Calu3 (cell line): ENCODE measurements at regions of chr17 and their contacts with region 1.

Region 1: DNA sequence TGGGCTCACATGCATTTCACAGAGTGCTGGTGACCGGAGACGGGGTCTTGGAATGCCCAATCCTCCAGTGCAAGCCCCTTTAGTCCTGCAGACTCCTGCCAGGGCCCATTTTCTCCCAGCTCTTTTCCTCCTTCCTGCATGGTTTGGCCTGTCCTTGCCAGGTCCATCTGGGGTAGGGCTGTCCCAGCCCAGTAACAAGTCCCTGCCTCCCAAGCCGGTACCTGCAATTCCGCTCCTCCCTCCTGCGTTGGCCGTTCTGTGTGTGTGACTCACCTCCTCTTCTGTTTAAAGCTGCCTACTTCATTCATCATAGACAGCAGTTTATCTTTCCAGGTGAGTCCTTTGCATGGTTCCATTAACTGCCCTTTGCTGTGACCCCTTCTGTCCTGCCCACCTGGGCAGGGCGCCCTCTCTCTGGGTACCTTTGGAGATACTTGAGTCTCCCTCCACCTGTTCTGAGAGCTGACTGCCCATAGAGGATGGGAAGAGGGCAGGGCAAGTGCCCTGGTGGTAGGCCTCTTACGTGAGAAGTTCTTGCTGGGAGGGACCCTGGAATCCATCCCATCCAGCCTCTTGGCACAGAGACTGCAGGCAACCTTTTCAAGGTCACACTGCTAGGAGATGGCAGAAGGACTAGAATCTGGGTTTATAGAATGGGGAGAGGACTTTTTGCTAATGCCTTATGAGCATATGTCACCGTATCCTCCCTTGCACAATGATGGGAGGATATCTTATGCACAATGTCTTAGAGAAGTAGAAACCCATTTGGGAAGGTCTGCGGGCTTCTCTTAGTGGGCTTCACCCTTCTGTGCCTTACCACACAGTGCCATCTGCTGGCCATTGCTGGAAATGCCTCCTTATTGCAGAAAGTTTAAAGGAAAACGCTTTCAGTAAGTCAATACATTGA is 29.7 kb upstream of the LGALS9 start:
- DNase-seq: peak; percentile 78
- H3K4me3 Mint-ChIP-seq: no peak overlapping the region
- H3K27ac Mint-ChIP-seq: no peak overlapping the region
- H3K4me1 Mint-ChIP-seq: peaks cover 10% of the 10 kb centered on the region
- H3K27me3 Mint-ChIP-seq: no peaks in the 10 kb centered on the region
- CTCF ChIP-seq: peak; percentile 68

Region 2: GRCh38 chr17:27199948-27200347 is 401.4 kb before region 1 on chr17:
- CTCF ChIA-PET with region 1: no interaction called
- intact Hi-C with region 1: loop called (anchors 2 kb)
- DNase-seq: no peak
- H3K4me3 Mint-ChIP-seq: no peak overlapping the region
- H3K27ac Mint-ChIP-seq: no peak overlapping the region
- H3K4me1 Mint-ChIP-seq: no peaks in the 10 kb centered on the region
- H3K27me3 Mint-ChIP-seq: no peaks in the 10 kb centered on the region
- CTCF ChIP-seq: no peak

Region 3: GRCh38 chr17:27353461-27354050 is 247.8 kb before region 1 on chr17:
- CTCF ChIA-PET with region 1: interaction called, 12 read pairs
- intact Hi-C with region 1: loop called (anchors 1 kb)
- DNase-seq: peak; percentile 95
- H3K4me3 Mint-ChIP-seq: peak overlapping the region; percentile 84
- H3K27ac Mint-ChIP-seq: peak overlapping the region; percentile 99
- H3K4me1 Mint-ChIP-seq: peaks cover 16% of the 10 kb centered on the region
- H3K27me3 Mint-ChIP-seq: no peaks in the 10 kb centered on the region
- CTCF ChIP-seq: peak; percentile 92

Region 4: DNA sequence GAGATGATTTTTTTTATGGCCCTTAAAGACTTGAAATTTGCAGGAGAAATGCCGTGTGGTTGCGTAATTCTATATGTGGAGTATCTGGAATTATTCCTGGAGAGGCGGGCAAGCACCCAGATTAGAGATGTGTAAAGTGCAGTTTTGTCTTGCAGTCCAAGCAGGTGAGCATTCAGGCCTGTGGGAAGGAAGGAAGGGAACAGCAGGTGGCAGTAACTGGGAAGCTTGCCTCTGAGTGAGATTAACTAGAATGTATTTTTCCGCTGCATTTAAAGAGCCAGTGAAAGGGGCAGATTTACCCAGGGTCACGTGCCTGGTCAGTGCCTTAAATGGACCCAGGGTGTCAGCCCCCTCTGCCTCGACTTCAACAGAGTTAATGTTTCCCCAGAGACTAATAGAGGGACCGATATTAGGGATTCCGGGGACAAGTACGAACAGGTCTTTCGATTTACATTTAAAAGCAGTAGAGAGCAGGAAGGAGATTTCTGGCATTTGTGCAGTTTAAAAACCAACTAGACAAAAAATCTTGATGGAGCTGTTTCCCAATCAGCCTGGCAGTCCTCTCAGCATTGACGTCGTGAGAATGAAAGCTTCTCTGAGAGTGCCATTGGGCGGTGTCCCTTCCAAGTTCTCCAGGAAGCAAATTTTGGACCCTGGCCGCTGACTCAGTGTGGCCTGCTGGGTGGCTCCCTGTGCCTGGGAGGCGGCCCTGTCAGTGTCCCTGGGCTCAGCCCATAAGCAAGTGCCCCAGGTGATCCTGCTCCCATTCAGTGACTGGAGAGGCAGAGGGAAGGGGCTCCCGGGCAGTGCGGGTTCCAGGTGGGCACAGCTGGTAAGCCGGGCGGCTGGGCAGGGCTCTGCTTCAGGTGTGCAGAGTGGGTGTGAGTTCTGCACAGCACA is 106.9 kb before region 1 on chr17:
- CTCF ChIA-PET with region 1: interaction called, 15 read pairs
- intact Hi-C with region 1: loop called (anchors 1 kb)
- DNase-seq: peak; percentile 76
- H3K4me3 Mint-ChIP-seq: peak overlapping the region; percentile 68
- H3K27ac Mint-ChIP-seq: peak overlapping the region; percentile 75
- H3K4me1 Mint-ChIP-seq: peaks cover 30% of the 10 kb centered on the region
- H3K27me3 Mint-ChIP-seq: no peaks in the 10 kb centered on the region
- CTCF ChIP-seq: no peak

Region 5: GRCh38 chr17:27654654-27655524 is 53.6 kb after region 1 on chr17:
- CTCF ChIA-PET with region 1: interaction called, 4 read pairs
- intact Hi-C with region 1: loop called (anchors 1 kb)
- DNase-seq: peak; percentile 83
- H3K4me3 Mint-ChIP-seq: no peak overlapping the region
- H3K27ac Mint-ChIP-seq: no peak overlapping the region
- H3K4me1 Mint-ChIP-seq: no peaks in the 10 kb centered on the region
- H3K27me3 Mint-ChIP-seq: peaks cover 34% of the 10 kb centered on the region
- CTCF ChIP-seq: peak; percentile 92